Activated CD4-positive, alpha-beta T cell treated with anti-CD3 and anti-CD28 coated beads, Interleukin-2, amount 10 ng/mL, durations not matched to agents 24 days and 14 days (primary cell): ENCODE measurements at regions of chr2 and their contacts with region 1.

Region 1: GRCh38 chr2:176140513-176141317 is 10.6 kb upstream of the HOXD4 start:
- DNase-seq: peak; percentile 92
- H3K4me3 Mint-ChIP-seq: peak overlapping the region; percentile 20
- H3K27ac Mint-ChIP-seq: no peak overlapping the region
- H3K4me1 Mint-ChIP-seq: peaks cover 4% of the 10 kb centered on the region
- H3K27me3 Mint-ChIP-seq: peaks cover 72% of the 10 kb centered on the region

Region 2: GRCh38 chr2:176067589-176068418 is 72.9 kb before region 1 on chr2:
- intact Hi-C with region 1: no loop called
- DNase-seq: no peak
- H3K4me3 Mint-ChIP-seq: no peak overlapping the region
- H3K27ac Mint-ChIP-seq: no peak overlapping the region
- H3K4me1 Mint-ChIP-seq: peaks cover 4% of the 10 kb centered on the region
- H3K27me3 Mint-ChIP-seq: peaks cover 77% of the 10 kb centered on the region

Region 3: DNA sequence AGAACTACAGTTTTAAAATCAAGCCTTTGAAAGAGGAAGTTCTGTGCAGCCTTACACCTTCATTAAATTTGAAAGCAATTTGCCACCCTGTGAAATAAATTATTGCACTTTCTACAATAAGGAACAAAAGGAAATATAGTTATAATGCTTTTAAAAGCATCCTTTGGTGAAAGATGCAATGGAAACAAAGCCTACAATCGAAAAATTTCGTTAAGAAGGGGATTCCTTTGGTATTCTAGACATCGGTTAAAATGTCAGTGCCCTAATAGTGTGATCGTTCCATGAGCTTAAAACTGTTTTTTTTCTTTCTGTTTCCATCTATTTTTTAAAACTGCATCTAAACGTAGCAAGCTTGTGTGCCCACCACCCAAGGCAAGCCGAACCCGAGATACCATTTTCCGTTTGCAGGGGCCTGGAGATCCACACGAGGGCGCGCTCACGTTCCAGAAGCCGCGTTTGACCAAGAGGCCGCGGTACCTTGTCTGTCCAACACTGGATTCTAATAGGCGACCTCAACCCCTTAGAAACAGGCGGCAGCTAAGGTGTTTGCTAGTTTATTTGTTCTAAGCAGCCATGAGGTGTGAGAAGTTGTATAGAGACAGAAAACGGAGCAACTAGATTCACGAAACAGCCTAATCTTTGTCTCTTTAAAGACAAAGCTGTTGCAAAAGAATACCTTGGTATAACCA is 29.6 kb before region 1 on chr2:
- intact Hi-C with region 1: no loop called
- DNase-seq: no peak
- H3K4me3 Mint-ChIP-seq: no peak overlapping the region
- H3K27ac Mint-ChIP-seq: peak overlapping the region; percentile 12
- H3K4me1 Mint-ChIP-seq: peaks cover 6% of the 10 kb centered on the region
- H3K27me3 Mint-ChIP-seq: peaks cover 76% of the 10 kb centered on the region

Region 4: DNA sequence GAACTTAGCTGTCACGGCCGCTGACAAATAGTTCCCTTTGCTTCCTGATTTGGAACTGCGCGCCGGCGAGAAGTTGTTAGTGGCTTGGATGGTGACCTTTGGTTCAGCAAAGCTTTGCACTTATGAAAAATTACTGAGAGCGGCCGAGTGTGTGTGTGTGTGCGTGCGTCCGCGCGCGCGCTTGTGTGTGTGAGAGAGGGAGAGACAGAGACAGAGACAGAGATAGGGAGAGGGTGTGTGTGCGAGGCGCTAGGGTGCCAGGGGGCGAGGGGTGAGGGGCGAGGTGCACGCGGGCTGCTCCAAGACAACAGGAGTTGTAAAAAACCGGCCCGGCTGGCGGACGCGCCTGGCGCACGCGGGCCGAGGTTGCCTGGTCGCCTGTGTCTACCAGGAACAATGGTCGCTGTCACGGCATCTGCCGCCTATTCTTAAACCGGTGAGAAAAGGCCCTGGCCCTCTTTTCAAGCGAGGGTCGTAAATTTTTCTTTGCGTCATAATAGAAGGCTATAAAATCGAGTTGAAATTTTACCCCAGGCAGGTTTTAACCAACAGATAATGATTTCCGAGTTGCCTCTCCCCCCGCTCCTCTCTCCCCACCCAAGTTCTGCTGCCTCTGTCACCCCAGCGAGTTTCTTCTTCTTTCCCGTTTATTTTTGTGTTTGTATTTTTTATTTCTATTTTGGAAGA is 16.9 kb after region 1 on chr2:
- intact Hi-C with region 1: loop called (anchors 2 kb)
- DNase-seq: peak; percentile 66
- H3K4me3 Mint-ChIP-seq: no peak overlapping the region
- H3K27ac Mint-ChIP-seq: peak overlapping the region; percentile 72
- H3K4me1 Mint-ChIP-seq: peaks cover 2% of the 10 kb centered on the region
- H3K27me3 Mint-ChIP-seq: peaks cover 82% of the 10 kb centered on the region

Region 5: GRCh38 chr2:176554101-176555048 is 413.7 kb after region 1 on chr2:
- intact Hi-C with region 1: loop called (anchors 1 kb)
- DNase-seq: peak; percentile 70
- H3K4me3 Mint-ChIP-seq: peak overlapping the region; percentile 80
- H3K27ac Mint-ChIP-seq: no peak overlapping the region
- H3K4me1 Mint-ChIP-seq: peaks cover 11% of the 10 kb centered on the region
- H3K27me3 Mint-ChIP-seq: peaks cover 48% of the 10 kb centered on the region

Region 6: GRCh38 chr2:176653479-176654443 is 513.0 kb after region 1 on chr2:
- intact Hi-C with region 1: loop called (anchors 5 kb)
- DNase-seq: peak; percentile 69
- H3K4me3 Mint-ChIP-seq: no peak overlapping the region
- H3K27ac Mint-ChIP-seq: no peak overlapping the region
- H3K4me1 Mint-ChIP-seq: peaks cover 10% of the 10 kb centered on the region
- H3K27me3 Mint-ChIP-seq: peaks cover 46% of the 10 kb centered on the region

Region 7: DNA sequence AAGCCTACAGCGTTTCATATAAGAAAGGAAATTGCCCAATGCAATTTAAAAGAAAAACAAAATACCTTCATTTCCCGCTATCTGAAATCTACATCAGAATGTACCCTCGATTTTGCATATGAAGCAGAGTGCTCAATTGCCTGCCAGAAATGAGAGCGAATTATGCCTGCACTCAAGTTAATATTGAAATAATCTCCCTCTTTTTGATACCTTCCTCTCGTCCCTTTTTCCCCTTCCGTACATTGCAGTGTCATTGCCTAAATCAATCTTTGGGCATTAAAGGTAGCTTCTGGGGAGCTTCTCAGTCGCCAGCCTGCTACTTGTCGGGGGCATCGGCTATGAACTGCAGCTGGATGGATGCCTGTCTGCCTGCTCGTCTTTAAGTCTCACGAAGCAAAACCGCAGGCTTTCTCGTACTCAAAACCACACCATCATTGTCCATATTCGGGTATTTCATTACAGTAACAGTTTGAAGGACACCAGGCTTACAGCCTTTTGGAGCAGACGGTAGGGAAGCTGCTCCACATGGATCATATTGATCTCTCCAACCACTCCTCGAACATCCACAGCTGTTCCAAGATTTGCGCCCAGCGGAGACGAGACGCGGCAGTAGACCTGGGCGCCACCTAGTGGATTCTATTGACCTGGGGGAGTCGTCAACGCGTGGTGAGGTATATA is 1007.9 kb after region 1 on chr2:
- intact Hi-C with region 1: loop called (anchors 5 kb)
- DNase-seq: peak; percentile 93
- H3K4me3 Mint-ChIP-seq: peak overlapping the region; percentile 89
- H3K27ac Mint-ChIP-seq: no peak overlapping the region
- H3K4me1 Mint-ChIP-seq: peaks cover 11% of the 10 kb centered on the region
- H3K27me3 Mint-ChIP-seq: peaks cover 58% of the 10 kb centered on the region